ENCODE measurements at regions of chr9 and their contacts with region 1.

Region 1: DNA sequence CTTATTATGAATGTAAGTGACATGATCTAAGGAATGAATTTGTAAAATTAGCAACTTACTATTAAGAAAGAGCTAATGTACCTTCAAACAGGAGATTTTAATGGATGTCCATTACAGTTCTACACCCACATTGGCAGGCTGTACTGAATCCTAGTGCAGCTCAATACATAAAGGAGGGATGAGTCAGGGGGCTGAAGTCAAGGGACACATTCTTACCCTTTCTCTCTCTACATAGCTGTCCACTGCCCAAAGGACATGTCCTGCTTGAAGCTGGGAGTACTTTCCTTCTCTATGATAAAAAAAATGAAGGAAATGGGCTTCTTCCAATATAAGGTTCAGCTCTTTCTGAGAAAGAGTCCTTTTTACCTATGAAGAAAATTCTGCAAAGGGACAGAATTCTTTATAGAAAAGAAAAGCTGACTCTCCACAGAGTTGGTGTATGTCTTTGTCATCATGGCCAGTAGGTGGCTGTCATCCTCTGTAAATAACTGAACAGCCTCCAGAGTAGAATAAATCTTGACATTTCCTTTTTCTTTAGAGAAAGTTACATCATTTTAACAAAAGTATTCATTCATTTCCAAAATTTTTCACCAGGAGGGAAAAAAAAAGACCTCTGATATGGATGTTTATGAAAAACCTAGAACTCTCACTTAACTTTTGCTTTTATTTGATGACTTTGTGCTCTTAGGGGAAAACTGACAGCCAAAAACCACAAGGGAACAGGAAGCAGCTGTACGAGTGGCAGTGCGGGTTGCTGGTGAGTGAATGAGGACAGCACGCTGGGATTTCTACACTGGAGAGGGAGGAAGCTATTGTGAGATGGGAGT is 13.1 kb upstream of the IFNA14 start:
- DNase-seq: peak in 3 of 10 donors; percentile 28 to 44 (median 31)
- H3K4me3 ChIP-seq: peak overlapping the region in 17 of 59 donors; percentile 5 to 50 (median 26)
- H3K27ac ChIP-seq: peak overlapping the region in 1 of 59 donors; percentile 4
- H3K27me3 ChIP-seq: peaks cover 0 to 6% (median 0%) of the 10 kb centered on the region in 45 donors
- CTCF ChIP-seq: peak; percentile 50 to 83 (median 73)

Region 2: GRCh38 chr9:21234153-21234687 is 18.7 kb before region 1 on chr9:
- intact Hi-C with region 1: no loop called
- DNase-seq: no peak
- H3K4me3 ChIP-seq: no peak overlapping the region
- H3K27ac ChIP-seq: no peak overlapping the region
- H3K27me3 ChIP-seq: no peaks in the 10 kb centered on the region
- CTCF ChIP-seq: no peak

Region 3: GRCh38 chr9:21395778-21396717 is 143.1 kb after region 1 on chr9:
- intact Hi-C with region 1: loop called in 1 of 2 experiments (anchors 10 kb)
- DNase-seq: peak; percentile 51 to 77 (median 68)
- H3K4me3 ChIP-seq: peak overlapping the region; percentile 39 to 77 (median 65)
- H3K27ac ChIP-seq: peak overlapping the region in 4 of 59 donors; percentile 11 to 48 (median 20)
- H3K27me3 ChIP-seq: peaks cover 0 to 60% (median 10%) of the 10 kb centered on the region in 45 donors
- CTCF ChIP-seq: peak; percentile 48 to 91 (median 80)

Measured in dorsolateral prefrontal cortex (tissue), 120 donors.